ENCODE measurements at regions of chr6 and their contacts with region 1.

Region 1: DNA sequence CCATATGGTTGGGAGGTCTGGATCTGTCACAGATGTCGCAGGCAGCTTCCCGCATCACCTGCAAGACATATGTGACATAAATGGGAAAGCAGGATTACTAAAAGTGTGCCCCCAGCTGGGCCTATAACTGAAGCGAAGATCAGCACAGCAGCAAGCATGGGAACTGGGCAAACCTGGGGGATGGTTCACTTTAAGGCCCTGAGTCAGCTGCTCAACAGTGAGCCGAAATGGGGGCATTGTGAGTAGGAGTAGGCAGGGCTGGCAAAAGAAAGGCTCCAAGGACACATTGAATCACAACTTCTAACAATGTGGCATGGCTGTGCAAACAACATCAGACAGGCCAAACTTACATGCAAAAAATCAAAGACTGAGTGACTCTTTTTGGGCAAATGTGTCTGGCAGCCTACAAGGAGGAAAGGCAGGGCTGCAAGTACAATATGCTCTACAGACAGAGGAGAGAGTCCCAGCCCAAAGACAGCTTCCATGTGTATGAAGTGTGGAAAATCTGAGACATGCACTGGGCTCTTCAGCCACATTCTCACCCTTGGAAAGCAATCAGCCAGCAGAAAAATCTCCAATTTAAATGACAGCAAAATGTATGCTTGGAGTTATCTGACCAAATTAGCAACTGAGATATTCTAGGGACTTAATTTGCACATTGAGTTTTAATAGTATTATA is 531.0 kb upstream of the MMS22L start:
- DNase-seq: no peak
- H3K4me3 Mint-ChIP-seq: no peak overlapping the region
- H3K27ac Mint-ChIP-seq: no peak overlapping the region
- H3K4me1 Mint-ChIP-seq: no peaks in the 10 kb centered on the region
- H3K27me3 Mint-ChIP-seq: no peaks in the 10 kb centered on the region

Region 2: DNA sequence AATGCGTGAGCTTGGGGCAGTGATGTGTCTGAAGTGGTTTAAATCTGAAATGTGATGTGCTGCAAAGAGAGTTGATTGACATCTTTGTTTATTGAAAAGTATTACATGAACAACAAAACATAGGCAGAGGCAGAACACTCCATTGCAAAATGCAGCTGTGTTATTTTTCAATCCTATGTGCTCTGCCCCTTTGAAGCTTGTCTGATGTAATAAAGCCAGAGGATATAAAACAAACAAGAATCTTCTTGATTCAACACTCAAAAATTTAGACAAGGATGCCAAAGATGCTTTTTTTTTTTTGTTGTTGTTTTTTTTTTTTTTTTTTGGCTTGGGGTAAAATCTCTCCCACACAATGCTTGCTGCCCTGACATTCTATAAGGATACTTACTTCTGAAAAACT is 48.5 kb before region 1 on chr6:
- intact Hi-C with region 1: loop called (anchors 10 kb)
- DNase-seq: no peak
- H3K4me3 Mint-ChIP-seq: no peak overlapping the region
- H3K27ac Mint-ChIP-seq: no peak overlapping the region
- H3K4me1 Mint-ChIP-seq: no peaks in the 10 kb centered on the region
- H3K27me3 Mint-ChIP-seq: no peaks in the 10 kb centered on the region

Measured in activated T-helper 2 cell treated with anti-CD3 and anti-CD28 coated beads, Interferon-gamma antibody, Interleukin-2, Interleukin-4, amounts not matched to agents 10 μg/mL and 5 μg/mL and 100 μg/mL, durations not matched to agents 14 hours and 24 hours and 36 hours (primary cell).